RWPE1 (cell line): ENCODE measurements at regions of chr6 and their contacts with region 1.

Region 1: DNA sequence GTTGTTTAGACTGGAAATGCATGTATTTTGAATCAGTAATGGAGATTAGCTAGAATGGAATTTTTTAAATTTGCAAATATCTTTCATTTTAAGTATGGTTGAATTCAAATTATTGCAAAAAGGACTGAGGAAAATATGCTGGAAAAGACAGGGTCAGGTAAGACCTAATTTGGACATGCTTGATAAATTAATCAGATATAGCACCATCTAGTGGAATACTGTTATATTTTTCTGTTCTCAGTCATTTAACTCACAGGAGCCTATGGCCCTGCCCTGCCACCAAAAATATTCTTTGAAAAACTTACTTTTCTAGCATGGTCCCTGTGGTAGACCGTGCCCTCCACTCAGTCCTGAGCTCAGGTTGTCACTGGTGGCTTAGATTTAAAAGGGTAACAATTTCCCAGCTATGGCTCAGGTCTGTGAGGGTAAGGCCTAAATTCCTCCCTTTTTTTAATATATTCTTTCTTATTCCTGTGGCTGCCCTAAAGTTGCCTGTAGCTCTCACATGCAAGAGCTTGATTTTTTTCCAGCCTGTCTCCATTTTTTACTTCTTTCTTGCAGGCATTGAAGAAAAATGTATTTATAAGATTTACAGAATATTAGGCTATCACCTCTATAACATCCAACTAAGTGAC is 25.3 kb upstream of the KIAA1586 start:
- DNase-seq: peak; percentile 62
- H3K27ac ChIP-seq: no peak overlapping the region
- CTCF ChIP-seq: peak; percentile 59

Region 2: DNA sequence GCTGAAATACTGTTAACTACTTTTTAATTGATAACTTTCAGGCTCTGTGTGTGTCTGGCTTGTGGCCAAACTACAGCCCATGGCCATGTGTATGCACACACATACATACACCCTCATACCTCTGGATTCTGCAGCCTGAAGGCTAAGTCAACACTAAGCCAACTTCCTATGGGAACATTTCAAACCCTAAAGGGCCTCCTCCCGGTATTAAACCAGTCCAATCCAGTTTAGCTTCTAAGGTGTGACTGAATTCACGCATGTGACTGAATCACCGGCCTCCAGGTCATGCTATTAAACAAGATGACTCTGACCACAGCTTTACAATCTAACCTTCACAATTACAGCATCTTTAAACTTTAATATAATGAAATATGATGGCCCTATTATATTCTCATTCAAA is 357.8 kb before region 1 on chr6:
- CTCF ChIA-PET with region 1: no interaction called
- POLR2A ChIA-PET with region 1: no interaction called
- DNase-seq: peak; percentile 70
- H3K27ac ChIP-seq: peak overlapping the region; percentile 36; the same call in 1 of the 2 replicates
- CTCF ChIP-seq: no peak

Region 3: GRCh38 chr6:56888687-56889086 is 132.5 kb before region 1 on chr6:
- CTCF ChIA-PET with region 1: interaction called, 10 read pairs
- POLR2A ChIA-PET with region 1: no interaction called
- DNase-seq: no peak
- H3K27ac ChIP-seq: no peak overlapping the region
- CTCF ChIP-seq: no peak